HEK293 (cell line): ENCODE measurements at regions of chrX and their contacts with region 1.

Region 1: GRCh38 chrX:152941328-152942106 is 43.6 kb downstream of the ZNF185 start:
- H3K4me3 ChIP-seq: peak overlapping the region; percentile 56
- H3K27ac ChIP-seq: no peak overlapping the region; the same call in 1 of the 2 replicates
- H3K4me1 ChIP-seq: no peaks in the 10 kb centered on the region
- CTCF ChIP-seq: peak; percentile 94

Region 2: GRCh38 chrX:151988706-151989496 is 952.6 kb before region 1 on chrX:
- CTCF ChIA-PET with region 1: no interaction called
- POLR2A ChIA-PET with region 1: no interaction called
- H3K4me3 ChIP-seq: no peak overlapping the region
- H3K27ac ChIP-seq: no peak overlapping the region
- H3K4me1 ChIP-seq: no peaks in the 10 kb centered on the region
- CTCF ChIP-seq: no peak

Region 3: DNA sequence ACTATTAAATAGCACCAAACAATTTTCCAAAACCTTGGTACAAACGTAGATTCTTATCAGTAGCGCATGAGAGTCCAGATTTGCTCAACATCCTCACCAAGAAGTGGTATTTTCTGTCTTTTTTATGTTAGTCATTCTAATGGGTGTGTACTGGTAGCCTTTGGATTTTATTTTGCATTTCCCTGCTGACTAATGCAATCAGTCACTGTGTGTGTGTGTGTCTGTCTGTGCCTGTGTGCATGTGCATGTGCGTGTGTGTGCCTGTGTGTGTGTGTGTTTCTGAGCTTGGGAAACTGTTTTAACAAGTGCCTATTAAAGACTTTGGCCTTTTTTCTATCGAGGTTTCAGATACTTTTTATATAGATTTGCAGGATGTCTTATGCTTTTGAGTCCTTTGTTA is 720.9 kb before region 1 on chrX:
- CTCF ChIA-PET with region 1: no interaction called
- POLR2A ChIA-PET with region 1: no interaction called
- H3K4me3 ChIP-seq: no peak overlapping the region
- H3K27ac ChIP-seq: no peak overlapping the region
- H3K4me1 ChIP-seq: no peaks in the 10 kb centered on the region
- CTCF ChIP-seq: no peak

Region 4: GRCh38 chrX:152958524-152959465 is 17.3 kb after region 1 on chrX:
- CTCF ChIA-PET with region 1: interaction called, 12 read pairs
- POLR2A ChIA-PET with region 1: interaction called, 3 read pairs
- H3K4me3 ChIP-seq: peak overlapping the region; percentile 9; the same call in 1 of the 2 replicates
- H3K27ac ChIP-seq: no peak overlapping the region
- H3K4me1 ChIP-seq: no peaks in the 10 kb centered on the region
- CTCF ChIP-seq: peak; percentile 90

Region 5: GRCh38 chrX:153003981-153004380 is 62.5 kb after region 1 on chrX:
- CTCF ChIA-PET with region 1: no interaction called
- POLR2A ChIA-PET with region 1: no interaction called
- H3K4me3 ChIP-seq: no peak overlapping the region
- H3K27ac ChIP-seq: no peak overlapping the region
- H3K4me1 ChIP-seq: no peaks in the 10 kb centered on the region
- CTCF ChIP-seq: no peak

Region 6: GRCh38 chrX:153179131-153179530 is 237.6 kb after region 1 on chrX and contains the start of gene MAGEA1:
- CTCF ChIA-PET with region 1: no interaction called
- POLR2A ChIA-PET with region 1: no interaction called
- H3K4me3 ChIP-seq: no peak within 1 kb of the TSS
- H3K27ac ChIP-seq: no peak within 1 kb of the TSS
- H3K4me1 ChIP-seq: no peaks in the 10 kb centered on the region
- CTCF ChIP-seq: no peak

Region 7: GRCh38 chrX:153438531-153438930 is 497.0 kb after region 1 on chrX:
- CTCF ChIA-PET with region 1: interaction called, 10 read pairs
- POLR2A ChIA-PET with region 1: no interaction called
- H3K4me3 ChIP-seq: no peak overlapping the region
- H3K27ac ChIP-seq: no peak overlapping the region
- H3K4me1 ChIP-seq: no peaks in the 10 kb centered on the region
- CTCF ChIP-seq: peak; percentile 48